HEK293T (cell line): ENCODE measurements at regions of chrX and their contacts with region 1.

Region 1: GRCh38 chrX:104270920-104271512 is 16.3 kb upstream of the ESX1 start:
- DNase-seq: peak; percentile 75

Region 2: GRCh38 chrX:104195489-104196084 is 75.4 kb before region 1 on chrX:
- CTCF ChIA-PET with region 1: interaction called, 21 read pairs
- POLR2A ChIA-PET with region 1: no interaction called
- DNase-seq: peak; percentile 54

Region 3: DNA sequence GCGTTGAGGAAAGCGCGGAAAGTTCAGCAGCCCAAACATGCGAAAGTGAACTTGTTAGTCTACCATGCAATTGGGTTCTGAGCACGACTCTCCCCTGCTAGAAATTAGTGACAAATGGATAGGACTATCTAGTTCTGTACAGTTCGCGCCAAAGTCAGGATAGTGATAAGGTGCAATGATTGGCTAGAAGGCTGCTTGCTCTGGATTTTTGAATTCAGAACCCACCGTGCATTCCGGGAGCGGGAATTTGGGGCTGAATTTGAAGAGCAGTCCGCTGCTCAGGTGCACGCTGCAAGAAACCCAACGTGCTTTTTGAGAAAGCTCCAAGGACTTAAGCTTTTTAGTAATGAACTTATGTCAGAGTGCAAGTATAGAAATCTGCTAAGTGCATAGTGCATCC is 15.6 kb before region 1 on chrX:
- CTCF ChIA-PET with region 1: no interaction called
- POLR2A ChIA-PET with region 1: no interaction called
- DNase-seq: no peak